Activated CD4-positive, alpha-beta memory T cell treated with anti-CD3 and anti-CD28 coated beads for 36 hours (primary cell): ENCODE measurements at regions of chrX and their contacts with region 1.

Region 1: GRCh38 chrX:53481816-53482465 is 47.8 kb upstream of the HSD17B10 start:
- DNase-seq: peak; percentile 50
- H3K4me3 Mint-ChIP-seq: no peak overlapping the region
- H3K27ac Mint-ChIP-seq: no peak overlapping the region
- H3K4me1 Mint-ChIP-seq: no peaks in the 10 kb centered on the region
- H3K27me3 Mint-ChIP-seq: peaks cover 2% of the 10 kb centered on the region

Region 2: DNA sequence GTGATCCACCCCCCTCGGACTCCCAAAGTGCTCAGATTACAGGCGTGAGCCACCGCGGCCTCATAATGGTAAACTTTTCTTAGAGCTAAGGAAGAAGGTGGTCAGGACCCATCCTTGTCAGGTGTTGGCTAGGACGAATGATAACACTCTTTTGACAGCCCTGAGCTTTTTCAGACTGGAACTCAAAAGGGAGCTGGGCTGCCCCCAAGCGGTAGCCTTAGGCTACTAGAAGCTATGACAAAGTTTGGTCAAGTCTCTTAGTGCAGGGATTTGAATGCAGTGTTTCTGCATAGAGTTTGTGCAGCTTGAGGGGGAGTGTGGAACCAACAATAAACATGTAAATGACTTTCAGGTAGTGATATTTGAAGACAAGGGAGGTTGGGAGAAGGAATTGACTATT is 36.0 kb before region 1 on chrX:
- CTCF ChIA-PET with region 1: interaction called, 13 read pairs
- POLR2A ChIA-PET with region 1: no interaction called
- intact Hi-C with region 1: no loop called
- DNase-seq: peak; percentile 68
- H3K4me3 Mint-ChIP-seq: no peak overlapping the region
- H3K27ac Mint-ChIP-seq: no peak overlapping the region
- H3K4me1 Mint-ChIP-seq: no peaks in the 10 kb centered on the region
- H3K27me3 Mint-ChIP-seq: no peaks in the 10 kb centered on the region

Region 3: GRCh38 chrX:53471346-53471745 is 10.6 kb before region 1 on chrX:
- CTCF ChIA-PET with region 1: interaction called, 12 read pairs
- POLR2A ChIA-PET with region 1: no interaction called
- intact Hi-C with region 1: no loop called
- DNase-seq: no peak
- H3K4me3 Mint-ChIP-seq: no peak overlapping the region
- H3K27ac Mint-ChIP-seq: no peak overlapping the region
- H3K4me1 Mint-ChIP-seq: no peaks in the 10 kb centered on the region
- H3K27me3 Mint-ChIP-seq: no peaks in the 10 kb centered on the region